ENCODE measurements at regions of chr14 and their contacts with region 1.

Region 1: GRCh38 chr14:60349663-60350365 is 100.8 kb downstream of the PPM1A start:
- DNase-seq: peak in 2 of 10 donors; percentile 26 to 35
- H3K4me3 ChIP-seq: peak overlapping the region in 7 of 59 donors; percentile 1 to 14 (median 9)
- H3K27ac ChIP-seq: no peak overlapping the region
- H3K27me3 ChIP-seq: peaks cover 0 to 8% (median 0%) of the 10 kb centered on the region in 45 donors
- CTCF ChIP-seq: peak; percentile 47 to 87 (median 78)

Region 2: GRCh38 chr14:60212503-60213371 is 137.1 kb before region 1 on chr14:
- intact Hi-C with region 1: no loop called
- DNase-seq: no peak
- H3K4me3 ChIP-seq: no peak overlapping the region
- H3K27ac ChIP-seq: no peak overlapping the region
- H3K27me3 ChIP-seq: no peaks in the 10 kb centered on the region
- CTCF ChIP-seq: no peak

Region 3: GRCh38 chr14:60396718-60397343 is 47.0 kb after region 1 on chr14:
- intact Hi-C with region 1: no loop called
- DNase-seq: no peak
- H3K4me3 ChIP-seq: no peak overlapping the region
- H3K27ac ChIP-seq: no peak overlapping the region
- H3K27me3 ChIP-seq: no peaks in the 10 kb centered on the region
- CTCF ChIP-seq: no peak

Region 4: GRCh38 chr14:60561845-60562746 is 212.3 kb after region 1 on chr14:
- intact Hi-C with region 1: loop called (anchors 2 kb)
- DNase-seq: peak in 8 of 10 donors; percentile 6 to 65 (median 50)
- H3K4me3 ChIP-seq: no peak overlapping the region
- H3K27ac ChIP-seq: no peak overlapping the region
- H3K27me3 ChIP-seq: peaks cover 0 to 6% (median 0%) of the 10 kb centered on the region in 45 donors
- CTCF ChIP-seq: peak; percentile 14 to 76 (median 64)

Region 5: GRCh38 chr14:60686865-60687264 is 337.1 kb after region 1 on chr14:
- intact Hi-C with region 1: no loop called
- DNase-seq: no peak
- H3K4me3 ChIP-seq: no peak overlapping the region
- H3K27ac ChIP-seq: no peak overlapping the region
- H3K27me3 ChIP-seq: no peaks in the 10 kb centered on the region
- CTCF ChIP-seq: no peak